Activated T-helper 1 cell treated with anti-CD3 and anti-CD28 coated beads, Interleukin-12 subunit alpha, Interleukin-12 subunit beta, Interleukin-2, Interleukin-4 antibody, amounts not matched to agents 30 ng/mL and 10 ng/mL and 1 ng/mL, durations not matched to agents 14 hours and 24 hours and 36 hours (primary cell): ENCODE measurements at regions of chr14 and their contacts with region 1.

Region 1: DNA sequence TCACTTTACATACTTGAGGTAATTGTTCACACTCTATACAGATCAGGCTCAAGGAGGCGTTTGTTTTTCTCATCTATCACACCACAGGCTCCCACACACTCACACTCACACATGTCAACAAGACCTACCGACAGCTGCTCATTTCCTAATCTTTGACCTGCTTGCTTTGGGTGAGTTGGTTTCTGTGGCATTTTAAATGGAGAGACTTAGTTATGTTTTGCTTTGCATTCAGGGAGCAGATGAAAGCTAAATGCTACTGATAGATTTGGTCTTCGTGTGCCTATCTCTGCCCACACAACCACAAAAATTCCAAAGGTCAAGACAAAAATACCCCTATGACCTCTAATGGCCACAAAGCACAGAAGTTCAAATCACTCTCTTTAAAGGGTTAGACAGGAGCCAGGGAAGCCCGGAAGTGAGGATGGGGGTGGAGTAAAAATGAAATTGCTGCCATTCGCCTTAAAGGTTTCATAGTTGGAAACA is 203.5 kb upstream of the G2E3 start:
- DNase-seq: no peak
- H3K4me3 Mint-ChIP-seq: peak overlapping the region; percentile 3
- H3K27ac Mint-ChIP-seq: peak overlapping the region; percentile 74
- H3K4me1 Mint-ChIP-seq: peaks cover 22% of the 10 kb centered on the region
- H3K27me3 Mint-ChIP-seq: no peaks in the 10 kb centered on the region

Region 2: GRCh38 chr14:30287579-30288445 is 67.7 kb before region 1 on chr14:
- intact Hi-C with region 1: loop called (anchors 1 kb)
- DNase-seq: no peak
- H3K4me3 Mint-ChIP-seq: no peak overlapping the region
- H3K27ac Mint-ChIP-seq: no peak overlapping the region
- H3K4me1 Mint-ChIP-seq: no peaks in the 10 kb centered on the region
- H3K27me3 Mint-ChIP-seq: peaks cover 2% of the 10 kb centered on the region